ENCODE measurements at regions of chr1 and their contacts with region 1.

Region 1: DNA sequence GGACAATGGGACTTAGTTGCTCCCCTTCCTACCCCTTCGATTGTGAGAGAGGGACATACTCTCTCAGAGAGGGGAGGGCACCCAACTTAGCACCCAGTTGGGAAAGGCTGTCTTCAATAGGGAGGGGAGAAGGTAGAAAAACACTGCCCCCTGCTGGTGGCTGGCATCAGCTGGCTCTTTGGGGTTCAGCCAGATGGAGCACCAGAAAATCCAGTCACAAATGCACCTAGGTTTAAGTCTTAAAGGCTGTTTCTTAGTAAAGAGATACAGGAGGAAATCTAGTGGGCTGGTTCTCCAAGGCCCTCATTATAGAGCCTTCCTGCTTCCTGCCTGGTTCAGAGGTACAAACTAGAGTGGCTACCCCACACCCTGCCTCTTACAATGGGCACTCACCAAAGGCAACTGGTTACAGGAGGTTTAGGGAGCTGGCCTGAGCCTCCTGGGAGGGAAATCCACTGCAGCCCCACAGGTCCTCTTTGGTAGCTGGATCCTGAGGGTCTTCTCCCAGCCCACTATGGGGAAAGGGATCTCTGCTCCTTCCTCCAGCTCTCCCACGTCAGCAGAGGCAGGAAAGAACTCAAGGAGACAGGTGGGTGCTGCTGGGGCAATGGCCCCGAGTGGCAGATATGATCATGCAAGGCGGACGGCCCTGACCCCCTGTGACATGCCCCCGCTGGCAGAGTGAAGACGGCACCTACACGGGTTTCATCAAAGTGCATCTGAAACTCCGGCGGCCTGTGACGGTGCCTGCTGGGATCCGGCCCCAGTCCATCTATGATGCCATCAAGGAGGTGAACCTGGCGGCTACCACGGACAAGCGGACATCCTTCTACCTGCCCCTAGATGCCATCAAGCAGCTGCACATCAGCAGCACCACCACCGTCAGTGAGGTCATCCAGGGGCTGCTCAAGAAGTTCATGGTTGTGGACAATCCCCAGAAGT is 28.3 kb downstream of the EIF2D start:
- DNase-seq: peak; percentile 88
- H3K4me3 Mint-ChIP-seq: peak overlapping the region; percentile 63
- H3K27ac Mint-ChIP-seq: peak overlapping the region; percentile 90
- H3K4me1 Mint-ChIP-seq: peaks cover 91% of the 10 kb centered on the region
- H3K27me3 Mint-ChIP-seq: no peaks in the 10 kb centered on the region

Region 2: DNA sequence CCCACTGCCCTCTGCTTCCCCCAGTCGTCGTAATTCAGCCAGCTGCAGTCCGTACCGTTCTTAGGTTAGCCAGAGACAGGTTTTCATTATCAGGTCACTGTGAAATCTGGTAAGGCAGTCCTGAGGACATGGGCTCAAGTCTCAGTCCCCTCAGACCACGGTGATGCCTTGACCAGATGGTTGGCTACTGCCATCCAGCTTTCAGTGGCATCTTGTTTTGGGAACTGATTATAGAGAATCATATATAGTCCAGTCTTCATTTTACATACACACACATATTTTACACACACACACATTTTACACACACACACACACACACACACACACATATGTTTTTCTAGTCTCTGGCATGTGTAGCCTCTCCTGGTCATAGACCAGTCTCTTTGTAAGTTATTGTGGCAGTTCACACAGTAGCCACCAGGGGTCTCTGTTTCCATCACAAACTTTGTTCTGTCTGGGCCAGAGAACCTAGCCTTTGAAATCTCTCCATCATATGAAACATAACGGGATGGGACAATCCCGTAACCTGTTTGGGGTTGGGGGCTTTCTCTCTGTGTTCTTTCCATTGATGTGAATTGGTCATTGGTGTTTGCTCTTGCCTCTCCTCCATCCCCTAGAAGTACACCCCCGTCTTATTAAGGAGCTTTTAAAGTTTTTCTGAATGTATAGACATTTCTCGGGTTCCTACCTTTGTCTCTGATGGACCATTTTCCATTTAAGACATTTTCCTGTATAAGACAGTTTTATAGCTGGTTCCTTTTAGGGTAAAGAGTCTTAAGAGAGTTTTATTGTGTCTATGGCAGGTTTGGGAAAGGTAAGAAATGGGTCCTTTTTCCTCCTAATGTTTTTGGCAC is 122.1 kb before region 1 on chr1:
- CTCF ChIA-PET with region 1: interaction called, 11 read pairs
- POLR2A ChIA-PET with region 1: interaction called, 3 read pairs
- DNase-seq: peak; percentile 79
- H3K4me3 Mint-ChIP-seq: no peak overlapping the region
- H3K27ac Mint-ChIP-seq: no peak overlapping the region
- H3K4me1 Mint-ChIP-seq: peaks cover 49% of the 10 kb centered on the region
- H3K27me3 Mint-ChIP-seq: no peaks in the 10 kb centered on the region

Region 3: DNA sequence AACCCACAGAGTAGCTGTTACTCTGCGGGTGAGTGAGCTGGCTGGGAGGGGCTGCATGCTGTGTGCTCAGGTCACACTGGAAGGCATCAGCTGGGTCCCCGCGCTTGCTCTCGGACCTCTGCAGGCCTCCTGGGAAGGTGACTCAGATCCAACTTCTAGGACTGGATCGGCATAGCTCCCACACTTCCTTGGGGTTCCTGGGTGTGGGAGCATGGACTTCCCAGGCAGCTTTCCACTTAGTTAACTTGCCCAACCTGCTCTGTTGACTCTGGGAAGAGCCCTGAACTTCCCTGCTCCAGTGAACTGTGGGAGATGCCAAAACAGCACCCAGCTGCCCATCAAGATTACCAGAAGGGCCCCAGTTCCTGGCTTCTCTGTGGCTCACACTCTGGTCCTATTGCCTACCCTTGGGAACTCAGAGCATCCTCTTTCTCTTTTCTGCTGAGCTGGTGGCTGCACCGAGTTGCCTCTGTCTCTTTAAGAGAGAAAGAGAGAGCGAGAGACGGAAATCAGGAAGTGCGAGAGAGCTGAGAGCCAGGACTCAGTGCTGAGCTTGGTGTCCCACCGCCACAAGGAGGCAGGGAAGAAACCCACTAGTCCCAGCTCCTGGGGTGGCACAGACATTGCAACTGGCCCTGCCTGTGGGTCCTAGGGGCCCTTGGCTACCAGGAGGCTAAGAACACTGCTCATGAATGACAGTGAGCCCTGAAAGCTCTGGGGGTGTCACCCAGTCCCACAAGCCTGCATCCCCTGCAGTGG is 113.9 kb before region 1 on chr1 and contains the start of gene IKBKE:
- CTCF ChIA-PET with region 1: interaction called, 9 read pairs
- POLR2A ChIA-PET with region 1: interaction called, 11 read pairs
- DNase-seq: peak; percentile 72
- H3K4me3 Mint-ChIP-seq: peak within 1 kb of the TSS; percentile 93
- H3K27ac Mint-ChIP-seq: peak within 1 kb of the TSS; percentile 77
- H3K4me1 Mint-ChIP-seq: peaks cover 86% of the 10 kb centered on the region
- H3K27me3 Mint-ChIP-seq: no peaks in the 10 kb centered on the region
- total RNA-seq, gene IKBKE: 61.8 to 63.6 TPM

Region 4: GRCh38 chr1:206479183-206480125 is 104.5 kb before region 1 on chr1:
- CTCF ChIA-PET with region 1: interaction called, 26 read pairs
- POLR2A ChIA-PET with region 1: no interaction called
- DNase-seq: peak; percentile 73
- H3K4me3 Mint-ChIP-seq: no peak overlapping the region
- H3K27ac Mint-ChIP-seq: peak overlapping the region; percentile 56
- H3K4me1 Mint-ChIP-seq: peaks cover 10% of the 10 kb centered on the region
- H3K27me3 Mint-ChIP-seq: no peaks in the 10 kb centered on the region

Region 5: GRCh38 chr1:206489980-206490770 is 93.8 kb before region 1 on chr1:
- CTCF ChIA-PET with region 1: interaction called, 35 read pairs
- POLR2A ChIA-PET with region 1: interaction called, 7 read pairs
- DNase-seq: peak; percentile 74
- H3K4me3 Mint-ChIP-seq: no peak overlapping the region
- H3K27ac Mint-ChIP-seq: peak overlapping the region; percentile 44
- H3K4me1 Mint-ChIP-seq: peaks cover 11% of the 10 kb centered on the region
- H3K27me3 Mint-ChIP-seq: no peaks in the 10 kb centered on the region

Region 6: GRCh38 chr1:206556750-206557635 is 27.0 kb before region 1 on chr1:
- CTCF ChIA-PET with region 1: interaction called, 524 read pairs
- POLR2A ChIA-PET with region 1: interaction called, 1,193 read pairs
- DNase-seq: peak; percentile 94
- H3K4me3 Mint-ChIP-seq: peak overlapping the region; percentile 92
- H3K27ac Mint-ChIP-seq: peak overlapping the region; percentile 94
- H3K4me1 Mint-ChIP-seq: peaks cover 68% of the 10 kb centered on the region
- H3K27me3 Mint-ChIP-seq: no peaks in the 10 kb centered on the region

Region 7: GRCh38 chr1:206674745-206675175 is 90.8 kb after region 1 on chr1:
- CTCF ChIA-PET with region 1: no interaction called
- POLR2A ChIA-PET with region 1: no interaction called
- DNase-seq: no peak
- H3K4me3 Mint-ChIP-seq: no peak overlapping the region
- H3K27ac Mint-ChIP-seq: no peak overlapping the region
- H3K4me1 Mint-ChIP-seq: peaks cover 14% of the 10 kb centered on the region
- H3K27me3 Mint-ChIP-seq: peaks cover 6% of the 10 kb centered on the region

Region 8: DNA sequence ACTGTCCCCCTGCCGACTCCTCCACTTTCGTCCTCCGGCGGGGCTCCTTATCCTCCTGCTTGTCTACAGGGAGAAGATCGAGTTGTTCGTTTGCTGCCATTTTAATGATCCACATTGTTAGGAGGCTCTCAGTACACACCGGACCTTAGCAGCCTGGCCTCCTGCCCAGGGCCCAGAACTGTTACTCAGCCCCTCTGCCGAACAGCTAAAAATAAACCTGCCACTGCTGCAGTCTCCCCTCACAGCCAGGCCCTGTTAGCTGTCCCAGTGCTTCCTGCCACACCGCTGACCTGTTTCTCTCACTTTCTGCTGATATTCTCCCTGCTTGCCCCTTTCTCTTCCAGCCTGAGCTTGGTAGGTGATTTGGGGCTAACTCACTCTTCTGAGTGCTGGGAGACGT is 109.1 kb after region 1 on chr1:
- CTCF ChIA-PET with region 1: no interaction called
- POLR2A ChIA-PET with region 1: no interaction called
- DNase-seq: no peak
- H3K4me3 Mint-ChIP-seq: no peak overlapping the region
- H3K27ac Mint-ChIP-seq: no peak overlapping the region
- H3K4me1 Mint-ChIP-seq: peaks cover 54% of the 10 kb centered on the region
- H3K27me3 Mint-ChIP-seq: no peaks in the 10 kb centered on the region